Activated CD4-positive, alpha-beta T cell treated with anti-CD3 and anti-CD28 coated beads for 36 hours (primary cell): ENCODE measurements at regions of chr12 and their contacts with region 1.

Region 1: DNA sequence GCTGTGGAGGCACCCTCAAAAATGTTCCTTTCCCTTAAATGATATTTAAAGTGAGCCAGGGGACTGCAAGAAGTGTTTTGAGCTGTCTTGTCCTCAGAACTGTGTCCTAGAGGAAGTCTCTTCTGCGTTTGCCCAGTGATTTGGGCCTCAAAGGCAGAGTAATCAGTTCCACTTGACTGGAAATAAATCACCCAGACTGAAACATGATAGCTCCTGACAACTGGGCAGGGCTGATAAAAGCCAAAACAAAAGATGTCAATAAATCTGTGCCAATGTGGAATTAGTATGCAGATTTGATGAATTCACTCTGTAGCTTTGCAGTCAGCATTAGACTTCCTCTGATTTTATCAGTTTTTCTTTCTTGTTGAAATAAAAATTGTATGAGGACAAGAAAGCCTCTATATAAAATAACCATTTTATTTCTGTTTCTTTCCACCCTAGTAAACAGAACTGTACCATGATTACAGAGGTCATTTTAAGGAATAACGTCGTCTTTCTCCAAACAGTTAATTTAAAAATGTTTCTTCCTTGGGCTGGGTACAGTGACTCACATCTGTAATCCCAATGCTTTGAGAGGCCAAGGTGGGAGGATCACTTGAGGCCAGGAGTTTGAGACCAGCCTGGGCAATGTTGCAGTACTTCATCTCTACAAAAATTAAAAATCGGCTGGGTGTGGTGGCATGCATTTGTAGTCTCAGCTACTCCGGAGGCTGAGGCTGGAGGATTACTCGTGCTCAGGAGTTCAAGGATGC is 180.8 kb downstream of the ERC1 start:
- DNase-seq: no peak
- ATAC-seq: no peak
- H3K4me3 Mint-ChIP-seq: no peak overlapping the region
- H3K27ac Mint-ChIP-seq: no peak overlapping the region
- H3K4me1 Mint-ChIP-seq: peaks cover 2% of the 10 kb centered on the region
- H3K27me3 Mint-ChIP-seq: no peaks in the 10 kb centered on the region

Region 2: GRCh38 chr12:690466-690865 is 481.4 kb before region 1 on chr12:
- CTCF ChIA-PET with region 1: no interaction called
- POLR2A ChIA-PET with region 1: no interaction called
- intact Hi-C with region 1: loop called in 1 of 2 experiments (anchors 5 kb)
- DNase-seq: no peak
- ATAC-seq: no peak
- H3K4me3 Mint-ChIP-seq: no peak overlapping the region
- H3K27ac Mint-ChIP-seq: no peak overlapping the region
- H3K4me1 Mint-ChIP-seq: peaks cover 18% of the 10 kb centered on the region
- H3K27me3 Mint-ChIP-seq: no peaks in the 10 kb centered on the region

Region 3: DNA sequence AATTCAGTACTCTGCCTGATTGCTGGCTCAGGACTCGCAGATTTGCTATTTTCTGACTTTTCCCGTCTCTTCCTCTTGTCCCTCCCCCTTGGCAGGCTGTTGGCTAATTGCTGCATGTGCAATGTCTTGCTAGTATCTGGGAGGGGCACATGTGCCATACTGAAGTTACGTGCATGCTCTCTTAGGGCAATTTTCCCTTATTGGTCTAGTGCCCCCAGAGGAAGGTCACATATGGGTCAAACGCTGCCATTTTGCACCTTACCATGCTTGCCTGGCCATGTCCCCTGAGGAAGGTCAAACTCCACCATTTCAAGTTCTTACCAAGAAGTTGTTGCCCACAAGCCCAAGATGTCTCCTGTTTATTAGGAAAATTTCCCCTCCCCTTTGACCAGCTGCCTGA is 194.7 kb before region 1 on chr12:
- CTCF ChIA-PET with region 1: no interaction called
- POLR2A ChIA-PET with region 1: no interaction called
- intact Hi-C with region 1: no loop called
- DNase-seq: no peak
- ATAC-seq: no peak
- H3K4me3 Mint-ChIP-seq: no peak overlapping the region
- H3K27ac Mint-ChIP-seq: no peak overlapping the region
- H3K4me1 Mint-ChIP-seq: peaks cover 2% of the 10 kb centered on the region
- H3K27me3 Mint-ChIP-seq: no peaks in the 10 kb centered on the region

Region 4: DNA sequence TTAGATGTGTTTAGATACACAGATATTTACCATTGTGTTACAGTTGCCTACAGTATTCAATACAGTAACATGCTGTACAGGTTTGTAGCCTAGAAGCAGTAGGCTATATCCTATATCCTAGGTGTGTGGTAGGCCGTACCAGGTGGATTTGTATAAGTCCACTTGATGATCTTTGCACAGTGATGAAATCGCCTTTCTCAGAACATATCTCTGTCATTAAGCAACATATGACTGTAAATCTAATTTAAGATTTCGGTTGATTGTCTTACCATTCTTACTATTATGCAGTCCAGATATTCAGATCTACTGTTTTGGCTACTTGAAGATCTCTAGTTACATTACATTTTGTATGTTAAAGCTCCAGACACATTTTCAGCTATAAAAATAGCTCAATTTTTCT is 141.1 kb before region 1 on chr12:
- CTCF ChIA-PET with region 1: no interaction called
- POLR2A ChIA-PET with region 1: no interaction called
- intact Hi-C with region 1: no loop called
- DNase-seq: no peak
- ATAC-seq: no peak
- H3K4me3 Mint-ChIP-seq: no peak overlapping the region
- H3K27ac Mint-ChIP-seq: no peak overlapping the region
- H3K4me1 Mint-ChIP-seq: no peaks in the 10 kb centered on the region
- H3K27me3 Mint-ChIP-seq: no peaks in the 10 kb centered on the region

Region 5: GRCh38 chr12:1041478-1041877 is 130.4 kb before region 1 on chr12:
- CTCF ChIA-PET with region 1: no interaction called
- POLR2A ChIA-PET with region 1: no interaction called
- intact Hi-C with region 1: no loop called
- DNase-seq: no peak
- ATAC-seq: no peak
- H3K4me3 Mint-ChIP-seq: no peak overlapping the region
- H3K27ac Mint-ChIP-seq: no peak overlapping the region
- H3K4me1 Mint-ChIP-seq: peaks cover 4% of the 10 kb centered on the region
- H3K27me3 Mint-ChIP-seq: no peaks in the 10 kb centered on the region

Region 6: DNA sequence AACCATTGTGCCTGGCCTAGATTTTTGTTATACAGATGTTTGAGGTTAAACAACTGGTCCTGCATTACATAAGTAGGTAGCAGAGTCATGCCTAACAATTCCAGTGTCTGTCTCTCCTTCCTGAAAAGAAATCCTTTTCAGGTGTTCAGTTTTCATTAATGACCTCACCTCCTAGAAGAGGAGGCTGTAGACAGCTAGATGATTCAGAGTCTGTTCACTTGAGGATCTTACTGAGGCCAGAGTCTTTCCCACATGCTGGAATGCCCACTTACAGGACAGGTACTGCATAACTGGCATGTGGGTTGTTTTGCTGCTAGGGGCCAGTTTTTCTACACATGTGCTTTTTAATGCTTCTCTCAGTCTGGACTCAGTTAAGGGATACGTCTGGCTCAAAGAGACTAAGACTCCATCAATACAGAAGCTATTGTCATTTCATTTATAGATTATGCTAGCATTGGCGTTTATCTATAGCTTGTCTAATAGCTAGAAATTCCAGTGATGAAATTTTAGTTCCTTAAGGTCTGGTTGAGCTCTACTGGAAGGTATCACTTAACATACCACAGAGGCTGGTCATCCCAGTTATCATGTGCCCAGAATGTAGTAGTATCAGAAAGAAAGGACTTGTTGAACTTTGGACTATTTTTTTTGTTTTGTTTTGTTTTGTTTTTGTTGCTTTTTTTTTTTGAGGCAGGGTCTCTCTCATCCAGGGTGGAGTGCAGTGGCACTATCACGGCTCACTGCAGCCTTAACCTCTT is 25.6 kb after region 1 on chr12:
- CTCF ChIA-PET with region 1: no interaction called
- POLR2A ChIA-PET with region 1: no interaction called
- intact Hi-C with region 1: no loop called
- DNase-seq: no peak
- ATAC-seq: no peak
- H3K4me3 Mint-ChIP-seq: no peak overlapping the region
- H3K27ac Mint-ChIP-seq: no peak overlapping the region
- H3K4me1 Mint-ChIP-seq: peaks cover 6% of the 10 kb centered on the region
- H3K27me3 Mint-ChIP-seq: no peaks in the 10 kb centered on the region